CD4-positive, alpha-beta T cell (primary cell): ENCODE measurements at regions of chr3 and their contacts with region 1.

Region 1: DNA sequence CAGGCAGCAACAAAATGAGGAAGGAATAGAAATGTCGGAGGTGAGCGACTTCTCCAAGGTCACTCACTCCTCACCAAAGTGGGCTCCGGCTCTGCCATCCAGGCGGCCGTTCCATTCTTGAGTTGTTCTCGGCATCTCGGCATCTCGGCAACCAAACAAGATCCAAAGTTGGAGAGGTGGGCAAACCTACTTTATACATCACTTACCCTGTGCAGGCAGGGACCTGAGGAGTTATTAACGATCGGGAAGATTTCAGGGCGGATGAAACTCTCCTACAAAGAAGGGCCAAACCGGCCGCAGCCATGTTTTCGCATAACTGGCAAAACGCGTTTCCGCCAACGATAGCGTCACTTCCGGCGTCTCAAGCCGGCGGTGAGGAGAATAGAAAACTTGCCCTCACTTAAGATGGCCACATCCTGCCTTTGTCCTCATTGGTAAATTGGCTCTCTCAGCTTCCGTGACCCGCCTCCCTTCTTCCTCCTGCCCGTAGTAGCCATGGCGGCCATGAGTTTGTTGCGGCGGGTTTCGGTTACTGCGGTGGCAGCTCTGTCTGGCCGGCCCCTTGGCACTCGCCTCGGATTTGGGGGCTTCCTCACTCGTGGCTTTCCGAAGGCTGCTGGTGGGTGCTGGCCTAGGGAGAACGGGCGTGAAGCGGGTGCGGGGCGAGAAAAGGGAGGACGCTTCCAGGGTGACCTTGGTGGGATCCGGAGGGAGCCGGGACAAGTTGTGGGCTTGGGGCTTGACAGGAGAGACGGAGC is at the starts of genes MRPL47 and NDUFB5:
- DNase-seq: peak; percentile 84 to 98 (median 89)
- ATAC-seq: peak; percentile 99
- H3K4me3 ChIP-seq: peak within 1 kb of the TSS; percentile 80
- H3K4me3 Mint-ChIP-seq: peak within 1 kb of the TSS; percentile 91
- H3K27ac ChIP-seq: peak within 1 kb of the TSS; percentile 90 to 91
- H3K27ac Mint-ChIP-seq: peak within 1 kb of the TSS; percentile 95
- H3K4me1 ChIP-seq: peaks cover 21% of the 10 kb centered on the region
- H3K4me1 Mint-ChIP-seq: peaks cover 56% of the 10 kb centered on the region
- H3K27me3 ChIP-seq: no peaks in the 10 kb centered on the region
- H3K27me3 Mint-ChIP-seq: no peaks in the 10 kb centered on the region
- CTCF ChIP-seq: no peak
- total RNA-seq, gene MRPL47: 24.8 to 28.6 TPM
- total RNA-seq, gene NDUFB5: 20.3 to 24.2 TPM

Region 2: DNA sequence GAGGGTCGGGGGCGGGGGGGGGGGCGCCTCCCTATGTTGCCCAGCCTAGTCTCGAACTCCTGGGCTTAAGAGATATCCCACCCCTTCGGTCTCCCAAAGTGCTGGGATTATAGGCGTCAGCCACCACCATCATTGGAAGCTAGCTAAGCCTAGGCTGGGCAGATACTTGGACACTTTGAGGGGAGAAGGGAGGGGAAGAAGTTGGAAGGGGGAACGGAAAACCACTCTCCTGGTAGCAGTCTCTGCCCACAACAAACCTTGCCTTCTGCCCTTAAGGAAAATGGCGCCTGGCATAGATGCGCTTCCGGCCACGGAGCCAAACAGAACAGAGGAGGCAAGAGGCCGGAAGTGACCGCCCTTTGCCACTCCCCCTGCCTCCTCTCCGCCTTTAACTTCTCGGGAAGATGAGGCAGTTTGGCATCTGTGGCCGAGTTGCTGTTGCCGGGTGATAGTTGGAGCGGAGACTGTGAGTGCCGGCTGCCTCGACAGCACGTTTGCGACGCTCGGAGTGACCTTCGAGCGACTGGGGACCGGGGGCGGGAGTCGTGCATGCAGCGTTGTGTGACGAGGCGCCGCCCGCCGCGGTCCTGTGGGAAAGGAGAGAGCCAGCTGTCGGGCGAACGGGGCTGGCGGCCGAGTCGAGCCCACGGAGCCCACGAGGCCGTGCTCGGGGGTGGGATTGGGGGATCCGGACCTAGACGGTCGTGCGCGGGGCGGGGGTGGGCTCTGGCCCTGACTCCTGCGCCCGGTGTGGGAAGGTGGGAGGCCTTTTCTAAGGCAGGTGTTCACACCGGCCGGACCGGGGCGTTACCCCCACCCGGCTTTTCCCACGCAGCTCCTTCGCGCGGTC is 256.9 kb before region 1 on chr3 and contains the start of gene MFN1:
- CTCF ChIA-PET with region 1: no interaction called
- POLR2A ChIA-PET with region 1: interaction called, 4 read pairs
- intact Hi-C with region 1: loop called in 1 of 2 experiments (anchors 5 kb)
- DNase-seq: peak; percentile 72 to 95 (median 84)
- ATAC-seq: peak; percentile 99
- H3K4me3 ChIP-seq: peak within 1 kb of the TSS; percentile 86
- H3K4me3 Mint-ChIP-seq: peak within 1 kb of the TSS; percentile 99
- H3K27ac ChIP-seq: peak within 1 kb of the TSS; percentile 63 to 74
- H3K27ac Mint-ChIP-seq: peak within 1 kb of the TSS; percentile 90
- H3K4me1 ChIP-seq: peaks cover 19% of the 10 kb centered on the region
- H3K4me1 Mint-ChIP-seq: peaks cover 28% of the 10 kb centered on the region
- H3K27me3 ChIP-seq: no peaks in the 10 kb centered on the region
- H3K27me3 Mint-ChIP-seq: no peaks in the 10 kb centered on the region
- CTCF ChIP-seq: no peak
- total RNA-seq, gene MFN1: 20.7 to 26.1 TPM

Region 3: DNA sequence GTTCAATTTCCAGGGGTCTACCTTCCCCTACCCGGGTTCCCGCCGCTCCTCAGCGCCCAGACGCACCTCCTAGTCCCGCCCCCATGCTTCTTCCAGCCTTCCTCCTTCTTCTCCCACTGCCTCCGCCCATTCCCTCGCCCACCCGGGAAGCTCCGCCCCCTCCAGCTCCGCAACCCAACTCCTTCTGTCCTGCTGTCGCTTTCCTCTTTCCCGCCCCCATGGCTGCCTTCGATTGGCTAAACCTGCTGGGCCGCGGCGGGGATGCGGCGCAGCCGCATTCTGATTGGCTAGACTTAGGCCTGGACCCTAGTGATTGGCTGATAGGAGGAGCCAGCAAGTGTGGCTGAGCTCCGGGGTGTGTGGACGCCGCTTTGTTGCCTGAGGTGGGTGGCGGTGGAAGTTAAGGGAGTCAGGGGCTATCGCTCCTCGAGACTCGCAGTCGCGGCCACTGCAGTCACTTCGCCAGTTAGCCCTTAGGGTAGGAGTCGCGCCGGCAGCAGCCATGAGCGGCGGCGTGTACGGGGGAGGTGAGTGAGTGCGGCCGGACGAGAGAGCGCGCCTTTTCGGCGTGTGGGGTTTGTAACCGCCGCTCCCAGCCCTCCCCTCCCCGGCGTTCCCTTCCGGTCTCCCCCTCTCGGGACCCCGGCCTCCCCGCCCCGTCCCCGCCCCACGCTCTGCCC is 41.8 kb before region 1 on chr3 and contains the start of gene ACTL6A:
- CTCF ChIA-PET with region 1: interaction called, 5 read pairs
- POLR2A ChIA-PET with region 1: interaction called, 12 read pairs
- intact Hi-C with region 1: loop called (anchors 1 to 2 kb)
- DNase-seq: peak; percentile 94 to 99 (median 98)
- ATAC-seq: peak; percentile 90
- H3K4me3 ChIP-seq: peak within 1 kb of the TSS; percentile 83
- H3K4me3 Mint-ChIP-seq: peak within 1 kb of the TSS; percentile 91
- H3K27ac ChIP-seq: peak within 1 kb of the TSS; percentile 38 to 57
- H3K27ac Mint-ChIP-seq: peak within 1 kb of the TSS; percentile 85
- H3K4me1 ChIP-seq: peaks cover 31% of the 10 kb centered on the region
- H3K4me1 Mint-ChIP-seq: peaks cover 30% of the 10 kb centered on the region
- H3K27me3 ChIP-seq: no peaks in the 10 kb centered on the region
- H3K27me3 Mint-ChIP-seq: peaks cover 5% of the 10 kb centered on the region
- CTCF ChIP-seq: no peak
- total RNA-seq, gene ACTL6A: 19.0 to 19.3 TPM

Region 4: GRCh38 chr3:179646177-179646576 is 41.7 kb after region 1 on chr3:
- CTCF ChIA-PET with region 1: interaction called, 3 read pairs
- POLR2A ChIA-PET with region 1: no interaction called
- intact Hi-C with region 1: loop called in 1 of 2 experiments (anchors 5 kb)
- DNase-seq: no peak
- ATAC-seq: no peak
- H3K4me3 ChIP-seq: no peak overlapping the region
- H3K4me3 Mint-ChIP-seq: no peak overlapping the region
- H3K27ac ChIP-seq: no peak overlapping the region
- H3K27ac Mint-ChIP-seq: no peak overlapping the region
- H3K4me1 ChIP-seq: peaks cover 5% of the 10 kb centered on the region
- H3K4me1 Mint-ChIP-seq: no peaks in the 10 kb centered on the region
- H3K27me3 ChIP-seq: no peaks in the 10 kb centered on the region
- H3K27me3 Mint-ChIP-seq: no peaks in the 10 kb centered on the region
- CTCF ChIP-seq: no peak

Region 5: GRCh38 chr3:179653096-179653797 is 48.7 kb after region 1 on chr3:
- CTCF ChIA-PET with region 1: interaction called, 3 read pairs
- POLR2A ChIA-PET with region 1: interaction called, 19 read pairs
- intact Hi-C with region 1: loop called (anchors 2 to 5 kb)
- DNase-seq: peak; percentile 44 to 82 (median 56)
- ATAC-seq: peak; percentile 64
- H3K4me3 ChIP-seq: peak overlapping the region; percentile 94
- H3K4me3 Mint-ChIP-seq: peak overlapping the region; percentile 98
- H3K27ac ChIP-seq: peak overlapping the region; percentile 47 to 48
- H3K27ac Mint-ChIP-seq: peak overlapping the region; percentile 91
- H3K4me1 ChIP-seq: peaks cover 22% of the 10 kb centered on the region
- H3K4me1 Mint-ChIP-seq: peaks cover 45% of the 10 kb centered on the region
- H3K27me3 ChIP-seq: no peaks in the 10 kb centered on the region
- H3K27me3 Mint-ChIP-seq: no peaks in the 10 kb centered on the region
- CTCF ChIP-seq: no peak

Region 6: DNA sequence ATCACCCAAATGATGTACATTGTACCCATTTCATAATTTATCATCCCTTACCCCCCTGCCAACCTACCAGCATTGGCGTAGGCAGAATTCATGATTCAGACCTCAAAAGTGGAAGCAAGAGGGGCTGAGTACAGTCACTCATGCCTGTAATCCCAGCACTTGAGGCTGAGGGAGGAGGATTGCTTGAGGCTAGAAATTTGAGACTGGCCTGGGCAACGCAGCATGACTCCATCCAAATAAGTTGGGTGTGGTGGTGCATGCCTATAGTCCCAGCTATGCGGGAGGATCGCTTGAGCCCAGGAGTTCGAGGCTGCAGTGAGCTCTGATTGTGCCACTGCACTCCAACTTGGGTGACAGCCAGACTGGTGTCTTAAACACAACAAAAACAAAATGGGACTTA is 1007.9 kb after region 1 on chr3:
- CTCF ChIA-PET with region 1: no interaction called
- POLR2A ChIA-PET with region 1: no interaction called
- intact Hi-C with region 1: loop called in 1 of 2 experiments (anchors 5 kb)
- DNase-seq: no peak
- ATAC-seq: no peak
- H3K4me3 ChIP-seq: no peak overlapping the region
- H3K4me3 Mint-ChIP-seq: no peak overlapping the region
- H3K27ac ChIP-seq: no peak overlapping the region
- H3K27ac Mint-ChIP-seq: no peak overlapping the region
- H3K4me1 ChIP-seq: no peaks in the 10 kb centered on the region
- H3K4me1 Mint-ChIP-seq: peaks cover 10% of the 10 kb centered on the region
- H3K27me3 ChIP-seq: no peaks in the 10 kb centered on the region
- H3K27me3 Mint-ChIP-seq: no peaks in the 10 kb centered on the region
- CTCF ChIP-seq: no peak